ENCODE measurements at regions of chr5 and their contacts with region 1.

Region 1: DNA sequence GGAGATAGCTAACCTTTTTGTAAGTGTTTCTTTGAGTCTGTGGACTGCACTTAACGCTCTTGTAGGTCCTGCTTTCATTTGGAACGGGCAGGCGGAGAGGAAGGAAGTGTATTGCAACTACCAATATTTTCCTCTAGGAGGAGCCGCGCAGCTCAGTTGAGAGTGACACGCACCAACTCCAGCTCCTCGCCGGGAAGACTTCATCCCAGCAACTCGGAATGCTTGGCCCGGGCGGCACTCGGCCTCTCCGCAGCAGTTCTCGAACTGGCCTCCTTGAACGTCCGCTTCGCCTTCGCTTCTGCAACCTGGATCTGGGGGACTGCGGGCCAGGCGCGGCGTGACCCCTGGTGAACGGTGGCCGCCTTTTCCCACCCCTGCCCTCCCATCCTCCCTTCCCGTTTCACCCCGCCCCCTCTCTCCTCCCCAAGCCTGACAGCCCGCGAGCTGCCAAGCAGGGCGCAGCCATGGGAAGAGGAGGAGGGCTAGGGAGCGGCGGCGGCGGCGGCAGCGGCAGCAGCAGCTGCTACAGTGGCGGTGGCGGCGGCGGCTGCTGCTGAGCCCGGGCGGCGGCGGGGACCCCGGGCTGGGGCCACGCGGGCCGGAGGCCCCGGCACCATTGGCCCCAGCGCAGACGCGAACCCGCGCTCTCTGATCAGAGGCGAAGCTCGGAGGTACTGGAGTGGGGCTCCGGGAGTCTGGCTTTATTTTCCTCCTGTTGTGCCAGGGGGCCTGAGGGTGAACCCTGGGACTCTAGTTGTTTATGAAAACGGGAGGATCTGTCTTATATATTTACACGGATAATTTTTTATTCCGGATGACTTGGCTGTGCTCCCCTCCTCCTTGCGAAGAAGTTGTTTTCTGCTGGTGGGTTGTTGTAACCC is at the start of gene GHR:
- DNase-seq: peak; percentile 79 to 80
- ATAC-seq: peak; percentile 95
- total RNA-seq, gene GHR: 4.0 to 8.0 TPM

Region 2: GRCh38 chr5:42583322-42583721 is 159.8 kb after region 1 on chr5:
- intact Hi-C with region 1: loop called in 1 of 2 experiments (anchors 5 kb)
- DNase-seq: peak; percentile 48 to 56
- ATAC-seq: peak; percentile 75

Region 3: GRCh38 chr5:42767491-42768105 is 344.1 kb after region 1 on chr5:
- intact Hi-C with region 1: loop called in 1 of 2 experiments (anchors 10 kb)
- DNase-seq: no peak
- ATAC-seq: peak; percentile 42

Region 4: DNA sequence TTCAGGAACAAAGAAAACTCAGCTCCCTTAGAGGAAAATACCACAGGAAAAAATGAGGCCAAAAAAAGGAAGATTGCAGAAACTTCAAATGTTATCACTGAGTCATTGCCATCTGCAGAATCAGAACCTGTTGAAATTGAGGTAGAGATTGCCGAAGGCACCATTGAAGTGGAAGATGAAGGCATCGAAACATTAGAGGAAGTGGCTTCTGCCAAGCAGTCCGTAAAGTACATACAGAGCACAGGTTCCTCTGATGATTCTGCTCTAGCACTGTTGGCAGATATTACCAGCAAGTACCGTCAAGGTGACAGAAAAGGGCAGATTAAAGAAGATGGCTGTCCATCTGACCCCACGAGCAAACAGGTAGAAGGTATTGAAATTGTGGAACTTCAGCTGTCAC is 737.7 kb after region 1 on chr5:
- intact Hi-C with region 1: no loop called
- DNase-seq: no peak
- ATAC-seq: no peak